ENCODE measurements at regions of chr9 and their contacts with region 1.

Region 1: GRCh38 chr9:120394058-120394669 is 185.8 kb downstream of the CDK5RAP2 start:
- DNase-seq: peak; percentile 48
- H3K4me3 Mint-ChIP-seq: peak overlapping the region; percentile 79
- H3K27ac Mint-ChIP-seq: peak overlapping the region; percentile 87
- H3K4me1 Mint-ChIP-seq: peaks cover 48% of the 10 kb centered on the region
- H3K27me3 Mint-ChIP-seq: no peaks in the 10 kb centered on the region

Region 2: DNA sequence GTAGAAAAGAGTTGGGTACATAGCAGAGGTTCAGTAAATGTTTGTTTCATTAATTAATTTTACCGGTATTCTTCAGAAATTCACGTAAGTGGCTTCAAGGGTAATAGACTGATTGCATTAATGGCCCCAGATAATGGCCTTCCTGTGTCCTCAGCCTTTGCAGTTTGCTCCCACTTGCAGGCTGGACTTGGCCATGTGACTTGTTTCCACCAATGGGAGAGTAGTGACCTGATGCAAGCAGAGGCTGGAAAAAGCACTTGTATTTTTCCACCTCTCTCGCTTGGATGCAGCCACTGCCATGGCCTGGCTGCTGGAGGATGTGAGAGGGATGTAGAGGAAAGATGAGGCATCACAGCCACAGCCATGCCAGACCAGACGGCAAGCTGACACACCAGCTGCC is 295.1 kb before region 1 on chr9:
- intact Hi-C with region 1: no loop called
- DNase-seq: no peak
- H3K4me3 Mint-ChIP-seq: no peak overlapping the region
- H3K27ac Mint-ChIP-seq: no peak overlapping the region
- H3K4me1 Mint-ChIP-seq: no peaks in the 10 kb centered on the region
- H3K27me3 Mint-ChIP-seq: no peaks in the 10 kb centered on the region

Region 3: GRCh38 chr9:120438836-120439546 is 44.8 kb after region 1 on chr9:
- intact Hi-C with region 1: loop called (anchors 1 kb)
- DNase-seq: no peak
- H3K4me3 Mint-ChIP-seq: no peak overlapping the region
- H3K27ac Mint-ChIP-seq: peak overlapping the region; percentile 45
- H3K4me1 Mint-ChIP-seq: peaks cover 38% of the 10 kb centered on the region
- H3K27me3 Mint-ChIP-seq: no peaks in the 10 kb centered on the region

Region 4: DNA sequence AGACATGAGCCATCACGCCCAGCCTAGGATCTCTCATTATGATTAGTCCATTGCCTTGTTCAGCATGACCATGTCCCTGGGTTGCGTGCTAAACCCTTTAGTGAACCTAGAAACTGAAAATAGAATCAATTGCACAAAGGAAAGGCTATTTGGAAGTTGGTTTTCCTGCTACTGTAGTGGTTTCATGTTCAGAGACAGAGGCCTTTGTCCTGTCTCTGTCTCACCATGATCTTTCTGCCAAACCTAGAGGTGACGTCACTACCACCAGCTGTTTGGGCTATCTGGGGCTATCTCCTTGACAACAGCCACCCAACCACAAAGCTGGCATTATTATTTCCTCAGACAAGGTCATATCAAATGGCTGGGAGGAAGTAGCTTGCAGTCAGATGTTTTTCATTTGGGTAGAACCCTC is 189.8 kb after region 1 on chr9:
- intact Hi-C with region 1: no loop called
- DNase-seq: no peak
- H3K4me3 Mint-ChIP-seq: no peak overlapping the region
- H3K27ac Mint-ChIP-seq: no peak overlapping the region
- H3K4me1 Mint-ChIP-seq: peaks cover 22% of the 10 kb centered on the region
- H3K27me3 Mint-ChIP-seq: peaks cover 3% of the 10 kb centered on the region

Measured in activated T-helper 1 cell treated with anti-CD3 and anti-CD28 coated beads, Interleukin-12 subunit alpha, Interleukin-12 subunit beta, Interleukin-2, Interleukin-4 antibody, amounts not matched to agents 30 ng/mL and 10 ng/mL and 1 ng/mL, durations not matched to agents 14 hours and 24 hours and 36 hours (primary cell).